ENCODE measurements at regions of chr2 and their contacts with region 1.

Region 1: DNA sequence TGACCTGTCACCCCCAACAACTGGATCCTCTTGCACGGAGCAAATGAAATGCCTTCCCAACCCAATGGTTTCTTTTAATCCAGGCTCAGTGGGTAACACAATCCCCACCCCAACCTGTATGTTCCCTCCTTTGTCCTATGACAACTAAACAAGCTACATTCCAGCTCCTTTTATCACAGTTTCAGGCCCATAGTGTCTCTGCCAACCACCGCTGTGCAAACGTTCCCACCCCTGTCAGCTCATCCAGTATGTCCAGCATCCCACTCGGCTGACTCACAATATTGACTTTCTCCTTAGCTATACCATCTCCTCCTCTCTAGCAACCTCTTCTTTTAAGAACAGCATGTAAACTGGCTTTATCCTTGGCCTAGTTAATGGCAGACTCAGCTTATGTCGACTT is 117.9 kb upstream of the PPP1CB start:
- DNase-seq: peak; percentile 98
- ATAC-seq: peak; percentile 99
- H3K4me3 ChIP-seq: 0 out of 2 replicates have a peak overlapping the region, but pooled peaks have one; percentile 25
- H3K27ac ChIP-seq: peak overlapping the region; percentile 94
- H3K4me1 ChIP-seq: peaks cover 26% of the 10 kb centered on the region
- H3K27me3 ChIP-seq: no peaks in the 10 kb centered on the region
- CTCF ChIP-seq: no peak

Region 2: GRCh38 chr2:28528206-28528605 is 105.5 kb before region 1 on chr2:
- CTCF ChIA-PET with region 1: no interaction called
- POLR2A ChIA-PET with region 1: no interaction called
- intact Hi-C with region 1: no loop called
- DNase-seq: no peak
- ATAC-seq: no peak
- H3K4me3 ChIP-seq: no peak overlapping the region
- H3K27ac ChIP-seq: no peak overlapping the region
- H3K4me1 ChIP-seq: no peaks in the 10 kb centered on the region
- H3K27me3 ChIP-seq: no peaks in the 10 kb centered on the region
- CTCF ChIP-seq: no peak

Region 3: GRCh38 chr2:28729698-28730097 is 96.0 kb after region 1 on chr2:
- CTCF ChIA-PET with region 1: no interaction called
- POLR2A ChIA-PET with region 1: interaction called, 22 read pairs
- intact Hi-C with region 1: no loop called
- DNase-seq: peak; percentile 81
- ATAC-seq: peak; percentile 96
- H3K4me3 ChIP-seq: no peak overlapping the region
- H3K27ac ChIP-seq: peak overlapping the region; percentile 46
- H3K4me1 ChIP-seq: peaks cover 25% of the 10 kb centered on the region
- H3K27me3 ChIP-seq: no peaks in the 10 kb centered on the region
- CTCF ChIP-seq: no peak

Region 4: GRCh38 chr2:29000481-29000880 is 366.7 kb after region 1 on chr2:
- CTCF ChIA-PET with region 1: no interaction called
- POLR2A ChIA-PET with region 1: no interaction called
- intact Hi-C with region 1: no loop called
- DNase-seq: no peak
- ATAC-seq: no peak
- H3K4me3 ChIP-seq: no peak overlapping the region
- H3K27ac ChIP-seq: no peak overlapping the region
- H3K4me1 ChIP-seq: no peaks in the 10 kb centered on the region
- H3K27me3 ChIP-seq: no peaks in the 10 kb centered on the region
- CTCF ChIP-seq: no peak

Measured in PC-3 (cell line).